ENCODE measurements at regions of chr6 and their contacts with region 1.

Region 1: GRCh38 chr6:99467509-99468106 is 42.5 kb upstream of the PNISR start:
- H3K4me3 ChIP-seq: no peak overlapping the region
- H3K27ac ChIP-seq: no peak overlapping the region
- H3K4me1 ChIP-seq: no peaks in the 10 kb centered on the region
- CTCF ChIP-seq: 0 out of 2 replicates have a peak, but pooled peaks have one; percentile 21

Region 2: GRCh38 chr6:99822741-99823512 is 355.3 kb after region 1 on chr6:
- CTCF ChIA-PET with region 1: interaction called, 19 read pairs
- POLR2A ChIA-PET with region 1: interaction called, 5 read pairs
- H3K4me3 ChIP-seq: no peak overlapping the region
- H3K27ac ChIP-seq: no peak overlapping the region
- H3K4me1 ChIP-seq: no peaks in the 10 kb centered on the region
- CTCF ChIP-seq: peak; percentile 52; the same call in 1 of the 2 replicates